ENCODE measurements at regions of chr16 and their contacts with region 1.

Region 1: GRCh38 chr16:88941913-88942909 is 34.8 kb downstream of the CBFA2T3 start:
- DNase-seq: peak; percentile 58 to 85 (median 76)
- ATAC-seq: peak in 1 of 2 donors; percentile 34
- H3K4me3 ChIP-seq: peak overlapping the region; percentile 80
- H3K27ac ChIP-seq: no peak overlapping the region
- H3K4me1 ChIP-seq: peaks cover 2% of the 10 kb centered on the region
- H3K27me3 ChIP-seq: no peaks in the 10 kb centered on the region

Region 2: GRCh38 chr16:89093602-89094251 is 151.5 kb after region 1 on chr16 and contains the start of gene ACSF3:
- intact Hi-C with region 1: loop called in 1 of 4 experiments (anchors 10 kb)
- DNase-seq: peak; percentile 68 to 87 (median 85)
- ATAC-seq: peak; percentile 86 to 88
- H3K4me3 ChIP-seq: peak within 1 kb of the TSS; percentile 94
- H3K27ac ChIP-seq: peak within 1 kb of the TSS; percentile 31
- H3K4me1 ChIP-seq: peaks cover 6% of the 10 kb centered on the region
- H3K27me3 ChIP-seq: no peaks in the 10 kb centered on the region
- total RNA-seq, gene ACSF3: 13.9 to 22.4 (median 16.7) TPM

Region 3: DNA sequence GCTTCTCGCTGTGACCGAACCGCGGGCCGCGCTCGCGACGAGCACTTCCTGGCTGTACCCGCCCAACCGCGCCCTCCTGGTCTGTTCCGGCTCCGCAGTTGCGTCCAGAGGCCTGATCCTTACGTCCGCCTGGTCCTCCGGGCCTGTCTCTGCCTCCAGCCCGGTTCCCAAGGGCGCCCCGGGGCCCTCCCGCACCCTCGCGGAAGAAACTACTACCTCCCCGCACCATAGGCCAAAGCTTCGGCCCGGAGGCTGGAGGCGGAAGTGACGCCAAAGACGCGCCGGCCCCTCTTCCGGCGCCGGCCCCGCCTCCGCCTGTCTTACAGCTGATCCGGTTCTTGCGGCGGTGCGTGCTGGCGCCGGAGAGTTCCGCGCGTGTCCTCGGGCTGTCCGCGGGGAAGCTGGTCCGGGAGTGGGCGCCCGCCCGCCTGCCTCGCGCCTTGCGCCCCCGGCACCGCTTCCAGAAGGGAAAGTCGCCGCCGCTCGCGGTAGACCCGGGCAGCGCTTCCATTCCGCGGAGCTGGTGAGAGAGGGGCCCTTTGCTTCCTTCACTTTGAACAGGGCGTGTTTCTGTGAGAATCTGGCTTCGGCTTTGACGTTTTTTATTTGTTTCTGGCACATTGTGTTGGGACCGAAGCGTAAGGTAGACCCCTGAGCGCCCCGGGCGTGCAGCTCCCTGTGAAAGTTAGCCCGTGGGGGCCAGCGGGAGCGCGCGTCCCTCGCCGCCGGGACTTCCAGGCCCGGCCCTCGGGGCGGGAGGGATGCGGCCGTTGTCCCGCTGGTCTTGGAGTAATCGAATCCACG is 275.4 kb after region 1 on chr16 and contains the start of gene ZNF778:
- intact Hi-C with region 1: loop called in 2 of 4 experiments (anchors 10 kb)
- DNase-seq: peak; percentile 85 to 95 (median 92)
- ATAC-seq: peak; percentile 96
- H3K4me3 ChIP-seq: peak within 1 kb of the TSS; percentile 83
- H3K27ac ChIP-seq: peak within 1 kb of the TSS; percentile 92
- H3K4me1 ChIP-seq: no peaks in the 10 kb centered on the region
- H3K27me3 ChIP-seq: no peaks in the 10 kb centered on the region
- total RNA-seq, gene ZNF778: 6.6 to 9.0 (median 8.0) TPM

Measured in right cardiac atrium (tissue), 5 donors.